ENCODE measurements at regions of chr21 and their contacts with region 1.

Region 1: GRCh38 chr21:36927719-36928117 is 38.8 kb downstream of the HLCS start:
- DNase-seq: peak in 1 of 2 donors; percentile 82
- H3K4me3 ChIP-seq: no peak overlapping the region
- H3K27ac ChIP-seq: no peak overlapping the region
- H3K4me1 ChIP-seq: no peaks in the 10 kb centered on the region
- H3K27me3 ChIP-seq: no peaks in the 10 kb centered on the region
- CTCF ChIP-seq: peak; percentile 69 to 90 (median 86)

Region 2: GRCh38 chr21:36504067-36505058 is 423.4 kb before region 1 on chr21:
- intact Hi-C with region 1: loop called (anchors 2 kb)
- DNase-seq: no peak
- H3K4me3 ChIP-seq: no peak overlapping the region
- H3K27ac ChIP-seq: no peak overlapping the region
- H3K4me1 ChIP-seq: no peaks in the 10 kb centered on the region
- H3K27me3 ChIP-seq: no peaks in the 10 kb centered on the region
- CTCF ChIP-seq: peak; percentile 80 to 90 (median 85)

Region 3: GRCh38 chr21:36630485-36631206 is 297.1 kb before region 1 on chr21:
- intact Hi-C with region 1: loop called (anchors 2 kb)
- DNase-seq: no peak
- H3K4me3 ChIP-seq: no peak overlapping the region
- H3K27ac ChIP-seq: no peak overlapping the region
- H3K4me1 ChIP-seq: no peaks in the 10 kb centered on the region
- H3K27me3 ChIP-seq: no peaks in the 10 kb centered on the region
- CTCF ChIP-seq: peak; percentile 26 to 60 (median 44)

Region 4: DNA sequence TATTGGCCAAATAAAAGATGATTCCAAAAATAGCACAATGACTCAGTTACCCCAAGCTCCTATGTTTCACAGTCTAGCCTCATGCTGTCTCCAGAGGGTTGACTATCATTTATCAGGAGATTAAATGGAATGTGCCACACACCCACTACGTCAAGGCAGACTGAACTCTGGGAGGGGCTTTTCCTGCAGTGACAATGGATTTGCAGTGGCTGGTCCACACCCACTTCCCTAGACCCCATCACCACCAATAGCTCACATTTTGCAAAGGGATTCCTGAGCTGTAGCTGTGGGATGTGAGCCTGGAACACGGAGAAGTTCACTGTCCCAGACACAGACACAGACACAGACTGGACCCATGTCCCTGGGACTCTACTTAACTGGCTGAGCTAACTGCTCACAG is 38.3 kb before region 1 on chr21:
- intact Hi-C with region 1: no loop called
- DNase-seq: no peak
- H3K4me3 ChIP-seq: no peak overlapping the region
- H3K27ac ChIP-seq: no peak overlapping the region
- H3K4me1 ChIP-seq: no peaks in the 10 kb centered on the region
- H3K27me3 ChIP-seq: no peaks in the 10 kb centered on the region
- CTCF ChIP-seq: no peak

Measured in ascending aorta (tissue), 2 donors.